Ascending aorta (tissue), 2 donors: ENCODE measurements at regions of chr19 and their contacts with region 1.

Region 1: DNA sequence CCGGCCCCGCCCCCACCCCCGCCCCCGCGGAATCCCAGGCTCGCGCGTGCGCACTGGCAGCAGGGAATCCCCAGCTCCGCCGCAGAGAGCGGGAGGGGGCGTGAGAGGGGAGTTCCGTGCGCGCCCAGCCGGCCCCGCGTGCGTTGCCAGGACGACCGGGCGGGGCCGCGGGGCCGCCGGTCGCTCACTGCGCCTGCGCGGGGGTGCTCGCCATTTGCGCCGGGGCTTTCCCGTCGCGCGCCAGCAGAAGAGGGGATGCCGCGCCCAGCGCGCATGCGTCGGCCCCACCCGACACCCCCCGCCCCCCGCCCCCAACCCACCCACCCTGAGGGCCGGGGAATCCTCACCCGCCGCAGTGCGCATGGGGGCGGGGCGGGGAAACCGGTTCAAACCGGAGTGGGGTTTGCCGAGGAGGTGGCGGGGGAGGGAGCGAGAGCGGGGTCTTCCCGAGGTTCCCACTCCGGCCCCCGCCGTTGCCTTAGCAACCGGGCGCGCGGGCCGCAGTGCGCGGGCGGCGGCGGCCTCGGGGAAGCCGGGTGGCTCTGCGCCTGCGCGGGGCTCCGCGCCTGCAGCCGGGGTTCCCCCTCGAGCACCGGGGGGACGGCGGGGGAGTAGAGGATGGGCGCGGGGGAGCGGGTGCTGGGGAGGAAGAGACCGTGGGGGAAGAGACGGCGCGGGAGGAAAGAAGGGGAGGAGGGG is 15.1 kb downstream of the CCDC124 start:
- DNase-seq: peak; percentile 45 to 91
- H3K4me3 ChIP-seq: peak overlapping the region; percentile 87 to 90
- H3K27ac ChIP-seq: peak overlapping the region in 1 of 2 donors; percentile 46
- H3K4me1 ChIP-seq: peaks cover 10 to 32% of the 10 kb centered on the region in 2 donors
- H3K27me3 ChIP-seq: peaks cover 18% of the 10 kb centered on the region
- CTCF ChIP-seq: peak in 1 of 3 experiments; percentile 4

Region 2: DNA sequence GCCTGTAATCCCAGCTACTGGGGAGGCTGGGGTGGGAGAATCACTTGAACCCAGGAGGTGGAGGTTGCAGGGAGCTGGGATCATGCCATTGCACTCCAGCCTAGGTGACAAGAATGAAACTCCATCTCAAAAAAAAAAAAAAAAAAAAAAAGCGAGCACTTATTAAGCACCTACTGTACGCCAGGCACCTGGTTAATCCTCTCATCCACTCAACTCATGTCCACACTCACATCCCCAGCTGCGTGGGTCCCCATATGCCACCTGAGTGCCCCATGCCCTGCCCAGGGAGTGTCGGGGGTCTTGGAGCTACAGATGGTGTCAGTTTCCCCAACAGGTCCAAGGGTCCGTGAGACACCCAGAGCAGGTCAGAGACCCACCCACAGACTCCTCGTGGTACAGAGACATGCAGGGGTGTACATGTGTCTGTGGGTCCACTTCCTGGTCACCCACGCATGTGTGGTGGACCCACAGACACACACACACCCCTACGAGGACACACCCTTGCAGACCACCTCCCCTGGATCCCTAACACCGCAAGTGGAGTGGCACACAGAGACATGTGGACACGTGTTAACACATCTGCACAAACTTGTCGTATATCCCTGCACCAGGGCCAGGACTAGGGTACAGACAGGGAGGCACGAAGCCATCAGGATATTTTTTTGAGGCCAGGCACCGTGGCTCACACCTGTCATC is 130.1 kb before region 1 on chr19:
- intact Hi-C with region 1: no loop called
- DNase-seq: no peak
- H3K4me3 ChIP-seq: no peak overlapping the region
- H3K27ac ChIP-seq: no peak overlapping the region
- H3K4me1 ChIP-seq: no peaks in the 10 kb centered on the region
- H3K27me3 ChIP-seq: no peaks in the 10 kb centered on the region
- CTCF ChIP-seq: no peak

Region 3: DNA sequence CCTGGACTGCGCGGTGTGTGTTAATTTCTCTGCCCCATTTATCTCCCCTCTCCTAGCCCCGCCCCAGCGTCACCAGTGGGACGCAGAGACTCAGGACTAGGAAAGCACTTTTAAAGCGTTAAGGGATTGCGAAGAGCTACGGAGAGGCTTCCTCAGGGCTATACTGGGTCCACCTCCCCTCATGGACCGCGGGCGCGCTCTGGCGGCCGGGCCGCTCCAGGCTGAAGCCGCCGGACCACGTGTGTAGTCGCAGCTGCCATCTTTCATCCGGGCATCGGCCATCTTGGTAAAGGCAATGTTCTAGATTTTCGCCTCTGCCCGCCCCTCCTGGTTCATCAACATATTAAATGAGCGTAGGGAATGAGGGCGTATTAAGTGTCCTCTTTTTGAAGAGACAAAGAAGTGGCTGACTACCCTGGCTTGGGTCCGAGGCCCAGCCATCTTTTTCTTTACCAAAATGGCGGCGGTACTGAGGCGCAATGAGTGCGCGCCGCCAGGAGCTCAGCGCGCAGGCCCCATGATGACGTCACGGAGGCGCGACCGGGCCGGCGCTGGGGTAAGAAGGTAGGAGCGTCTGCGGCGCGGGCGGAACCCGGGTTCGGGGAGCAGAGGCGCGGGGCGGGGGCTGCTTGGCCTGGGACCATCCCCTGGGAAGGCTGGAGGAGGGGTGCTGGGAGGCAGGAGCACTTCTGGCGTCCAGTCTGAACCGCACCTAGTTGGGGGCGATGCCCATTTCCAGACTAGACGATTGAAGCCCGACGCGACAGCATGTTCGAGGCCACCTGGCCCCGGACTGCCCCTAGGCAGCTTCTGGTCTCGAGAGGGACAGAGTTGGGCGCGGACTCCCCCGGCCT is 15.3 kb before region 1 on chr19 and contains the start of gene CCDC124:
- intact Hi-C with region 1: loop called (anchors 1 kb)
- DNase-seq: peak; percentile 59 to 93
- H3K4me3 ChIP-seq: peak within 1 kb of the TSS; percentile 60 to 71
- H3K27ac ChIP-seq: peak within 1 kb of the TSS; percentile 67 to 84
- H3K4me1 ChIP-seq: peaks cover 5 to 7% of the 10 kb centered on the region in 2 donors
- H3K27me3 ChIP-seq: no peaks in the 10 kb centered on the region
- CTCF ChIP-seq: peak; percentile 55 to 77 (median 65)
- total RNA-seq, gene CCDC124: 43.3 TPM

Region 4: GRCh38 chr19:18000935-18001778 is 53.2 kb after region 1 on chr19:
- intact Hi-C with region 1: loop called (anchors 1 kb)
- DNase-seq: peak; percentile 93 to 99
- H3K4me3 ChIP-seq: peak overlapping the region; percentile 72 to 80
- H3K27ac ChIP-seq: peak overlapping the region; percentile 88 to 95
- H3K4me1 ChIP-seq: peaks cover 4 to 10% of the 10 kb centered on the region in 2 donors
- H3K27me3 ChIP-seq: no peaks in the 10 kb centered on the region
- CTCF ChIP-seq: no peak

Region 5: GRCh38 chr19:18058208-18059030 is 110.5 kb after region 1 on chr19:
- intact Hi-C with region 1: loop called (anchors 2 kb)
- DNase-seq: peak in 1 of 2 donors; percentile 85
- H3K4me3 ChIP-seq: peak overlapping the region; percentile 10 to 17
- H3K27ac ChIP-seq: peak overlapping the region; percentile 73 to 90
- H3K4me1 ChIP-seq: peaks cover 0 to 14% of the 10 kb centered on the region in 2 donors
- H3K27me3 ChIP-seq: no peaks in the 10 kb centered on the region
- CTCF ChIP-seq: peak; percentile 93 to 99 (median 97)